Activated T-helper 2 cell treated with anti-CD3 and anti-CD28 coated beads, Interferon-gamma antibody, Interleukin-2, Interleukin-4, amounts not matched to agents 10 μg/mL and 5 μg/mL and 100 μg/mL, durations not matched to agents 14 hours and 24 hours and 36 hours (primary cell): ENCODE measurements at regions of chr22 and their contacts with region 1.

Region 1: DNA sequence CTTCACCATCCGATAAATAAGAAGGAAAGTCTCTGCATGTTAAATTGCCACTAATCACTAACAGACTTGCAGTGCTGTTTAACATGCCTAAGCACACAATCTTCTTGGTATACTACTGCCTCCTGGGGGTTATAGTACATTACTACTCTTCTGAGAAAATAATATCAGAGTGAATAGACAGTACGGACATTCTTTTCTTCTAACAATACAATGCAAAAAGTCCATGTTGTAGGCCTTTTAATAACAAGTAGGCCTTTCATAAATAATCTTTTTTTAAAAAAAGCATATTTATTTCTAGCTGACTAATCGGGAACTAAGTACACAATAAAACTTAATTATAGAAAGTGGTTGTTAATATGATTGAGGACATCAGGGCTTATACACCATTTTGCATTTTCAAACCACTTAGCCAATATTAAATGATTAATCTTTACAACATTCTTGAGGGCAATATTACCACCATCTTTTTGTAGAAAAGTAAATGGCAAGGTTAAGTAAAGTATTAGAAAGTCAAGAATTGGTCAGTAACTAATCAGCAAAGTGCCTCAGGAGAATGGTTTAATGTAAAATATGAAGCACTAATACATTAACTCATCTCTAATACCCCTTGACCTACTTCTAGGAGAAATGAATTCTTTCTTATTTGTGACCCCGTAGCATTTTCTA is 84.7 kb downstream of the TTC28 start:
- DNase-seq: no peak
- H3K4me3 Mint-ChIP-seq: no peak overlapping the region
- H3K27ac Mint-ChIP-seq: no peak overlapping the region
- H3K4me1 Mint-ChIP-seq: no peaks in the 10 kb centered on the region
- H3K27me3 Mint-ChIP-seq: peaks cover 32% of the 10 kb centered on the region

Region 2: GRCh38 chr22:28019881-28020871 is 574.8 kb before region 1 on chr22:
- intact Hi-C with region 1: loop called (anchors 2 kb)
- DNase-seq: peak; percentile 46
- H3K4me3 Mint-ChIP-seq: no peak overlapping the region
- H3K27ac Mint-ChIP-seq: no peak overlapping the region
- H3K4me1 Mint-ChIP-seq: no peaks in the 10 kb centered on the region
- H3K27me3 Mint-ChIP-seq: no peaks in the 10 kb centered on the region

Region 3: DNA sequence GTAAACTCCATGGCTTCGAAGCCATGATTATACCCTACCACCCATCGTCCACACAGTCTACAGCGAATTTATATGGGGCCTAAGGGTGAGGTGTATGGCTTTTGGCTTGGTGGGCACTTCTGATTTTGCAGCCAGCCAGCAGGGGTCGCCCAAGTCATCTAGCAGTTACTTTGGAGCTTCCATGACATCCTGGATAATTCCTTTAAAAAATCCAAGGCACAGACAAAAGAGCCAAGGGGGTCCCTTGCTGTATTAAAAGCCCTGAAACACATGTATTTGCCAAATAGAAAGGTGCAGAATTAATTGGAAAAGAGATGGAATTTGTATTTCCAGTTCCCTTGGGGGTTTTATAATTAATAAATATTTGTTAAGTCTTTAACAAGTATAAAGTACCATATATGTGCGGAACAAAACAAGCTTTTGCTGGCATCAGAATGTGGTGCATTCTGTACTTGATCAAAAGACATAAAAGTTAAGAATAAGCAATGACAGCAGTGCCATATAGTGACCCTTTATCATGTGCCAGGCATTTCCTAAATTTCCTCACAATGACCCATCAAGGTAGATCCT is 543.1 kb before region 1 on chr22:
- intact Hi-C with region 1: loop called (anchors 10 kb)
- DNase-seq: no peak
- H3K4me3 Mint-ChIP-seq: no peak overlapping the region
- H3K27ac Mint-ChIP-seq: no peak overlapping the region
- H3K4me1 Mint-ChIP-seq: no peaks in the 10 kb centered on the region
- H3K27me3 Mint-ChIP-seq: peaks cover 2% of the 10 kb centered on the region

Region 4: GRCh38 chr22:28252539-28252938 is 342.4 kb before region 1 on chr22:
- intact Hi-C with region 1: loop called (anchors 10 kb)
- DNase-seq: no peak
- H3K4me3 Mint-ChIP-seq: no peak overlapping the region
- H3K27ac Mint-ChIP-seq: no peak overlapping the region
- H3K4me1 Mint-ChIP-seq: no peaks in the 10 kb centered on the region
- H3K27me3 Mint-ChIP-seq: no peaks in the 10 kb centered on the region

Region 5: GRCh38 chr22:28604966-28605761 is 10.2 kb after region 1 on chr22:
- intact Hi-C with region 1: no loop called
- DNase-seq: no peak
- H3K4me3 Mint-ChIP-seq: no peak overlapping the region
- H3K27ac Mint-ChIP-seq: no peak overlapping the region
- H3K4me1 Mint-ChIP-seq: no peaks in the 10 kb centered on the region
- H3K27me3 Mint-ChIP-seq: peaks cover 39% of the 10 kb centered on the region